Activated T-helper 1 cell treated with anti-CD3 and anti-CD28 coated beads, Interleukin-12 subunit alpha, Interleukin-12 subunit beta, Interleukin-2, Interleukin-4 antibody, amounts not matched to agents 30 ng/mL and 10 ng/mL and 1 ng/mL, durations not matched to agents 14 hours and 24 hours and 36 hours (primary cell): ENCODE measurements at regions of chr12 and their contacts with region 1.

Region 1: DNA sequence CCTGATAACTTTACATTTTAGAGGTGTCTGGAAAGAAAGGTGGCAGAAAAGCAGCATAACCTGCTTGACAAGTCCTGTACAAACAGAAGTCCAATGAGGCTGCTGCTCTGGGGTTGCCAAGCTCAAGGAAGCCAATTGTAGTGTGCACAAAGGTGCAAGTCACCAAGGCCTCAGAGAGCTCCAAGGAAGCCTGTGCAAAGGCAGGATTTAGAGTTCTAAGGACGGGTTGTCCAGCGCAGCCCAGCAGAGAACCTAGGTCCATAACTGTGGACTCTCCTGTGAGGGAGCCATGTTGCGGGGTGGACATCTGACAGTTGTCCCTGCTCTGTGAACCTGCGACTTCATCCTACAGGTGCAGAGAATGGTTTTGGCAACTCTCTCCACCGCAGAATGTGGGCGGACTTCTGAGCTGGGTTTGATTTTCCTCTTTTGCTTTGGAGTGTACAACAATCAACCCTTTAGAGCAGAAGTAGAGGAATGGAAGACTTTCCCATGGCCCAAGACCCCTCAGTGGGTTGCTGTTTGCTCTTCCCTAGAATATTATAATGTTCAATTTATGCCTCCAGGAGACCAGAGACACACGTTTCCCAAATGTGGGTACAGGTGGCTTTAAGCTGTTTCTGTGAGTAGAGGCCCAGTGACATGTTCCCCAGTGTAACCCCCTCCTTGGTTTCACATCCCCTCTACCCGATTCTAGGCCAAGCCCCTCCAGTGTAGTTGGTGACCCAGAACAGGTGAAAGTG is 81.0 kb downstream of the ETV6 start:
- DNase-seq: no peak
- H3K4me3 Mint-ChIP-seq: peak overlapping the region; percentile 66
- H3K27ac Mint-ChIP-seq: peak overlapping the region; percentile 86
- H3K4me1 Mint-ChIP-seq: peaks cover 93% of the 10 kb centered on the region
- H3K27me3 Mint-ChIP-seq: no peaks in the 10 kb centered on the region

Region 2: DNA sequence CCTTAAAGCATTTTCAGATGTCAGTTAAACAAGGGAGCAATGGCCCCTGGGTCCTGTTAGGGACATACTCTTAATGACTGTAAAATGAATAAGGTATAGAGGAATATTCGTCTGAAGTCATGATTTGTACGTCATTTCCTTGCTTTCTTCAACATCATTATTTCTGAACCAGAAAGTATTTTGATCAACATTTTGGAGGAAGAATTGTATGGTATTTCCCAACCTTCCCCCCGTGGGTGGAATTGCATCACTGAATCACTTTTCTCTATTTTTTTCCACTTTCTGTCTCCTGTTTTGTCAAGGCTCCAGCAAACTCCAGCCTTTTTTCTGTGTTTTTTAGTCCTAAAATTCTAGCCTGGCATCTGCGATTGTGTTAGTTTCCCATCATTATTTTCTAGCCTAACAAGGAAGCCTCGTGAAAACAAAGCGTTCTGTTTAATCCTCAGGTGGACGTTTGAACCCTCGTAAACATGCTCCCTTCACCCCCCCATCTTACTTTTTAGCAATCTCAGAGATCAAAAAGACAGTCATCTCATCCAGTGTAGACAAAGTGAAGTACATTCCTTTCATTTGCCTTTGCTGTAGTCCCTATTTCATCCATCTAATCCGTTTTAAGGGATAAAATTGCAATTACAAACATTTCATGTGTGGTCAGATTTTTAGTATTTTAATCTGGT is 18.7 kb before region 1 on chr12:
- intact Hi-C with region 1: loop called (anchors 2 kb)
- DNase-seq: no peak
- H3K4me3 Mint-ChIP-seq: no peak overlapping the region
- H3K27ac Mint-ChIP-seq: peak overlapping the region; percentile 75
- H3K4me1 Mint-ChIP-seq: peaks cover 76% of the 10 kb centered on the region
- H3K27me3 Mint-ChIP-seq: no peaks in the 10 kb centered on the region

Region 3: DNA sequence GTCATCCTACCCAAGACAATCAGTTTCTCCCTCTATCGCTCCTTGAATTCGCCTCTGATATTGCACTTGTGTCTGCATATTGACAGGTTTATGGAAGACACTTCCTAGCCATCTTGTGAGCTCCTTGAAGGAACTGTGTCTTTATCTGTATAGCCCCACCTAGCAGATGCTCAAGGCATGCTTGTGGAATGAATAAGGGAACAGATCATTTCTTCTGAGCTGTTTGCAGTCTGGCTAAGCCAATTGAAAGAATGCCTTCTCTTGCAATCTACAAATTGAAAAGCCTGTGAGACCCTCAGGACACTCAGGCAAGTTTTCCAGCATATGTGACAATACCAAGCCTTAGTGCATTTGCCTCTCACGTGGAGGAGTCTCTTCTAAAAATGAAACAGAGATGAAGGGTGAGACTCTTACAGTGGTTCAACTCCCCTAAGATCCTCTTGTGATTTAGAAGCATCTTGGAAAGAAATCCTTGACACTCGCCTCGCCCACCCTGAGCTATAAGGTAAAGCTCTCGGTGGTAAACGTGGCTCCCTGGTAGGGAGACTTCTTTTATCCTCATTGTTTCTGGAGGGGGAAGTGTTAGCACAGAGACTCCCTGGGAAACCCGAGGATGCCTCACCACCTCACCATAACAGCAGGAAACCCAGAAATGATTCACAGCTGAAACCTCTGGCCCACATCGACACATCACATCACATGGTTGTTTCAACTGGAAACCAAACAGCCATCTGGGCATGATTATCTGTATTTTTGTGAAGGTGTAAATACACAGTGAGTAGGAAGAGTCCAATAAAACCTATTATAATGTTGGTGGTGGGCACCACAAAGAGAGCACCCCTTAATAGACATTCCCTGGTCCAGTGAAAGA is 228.0 kb after region 1 on chr12:
- intact Hi-C with region 1: loop called (anchors 2 kb)
- DNase-seq: peak; percentile 55
- H3K4me3 Mint-ChIP-seq: peak overlapping the region; percentile 29
- H3K27ac Mint-ChIP-seq: peak overlapping the region; percentile 89
- H3K4me1 Mint-ChIP-seq: peaks cover 76% of the 10 kb centered on the region
- H3K27me3 Mint-ChIP-seq: no peaks in the 10 kb centered on the region